Natural killer cell (primary cell): ENCODE measurements at regions of chr10 and their contacts with region 1.

Region 1: DNA sequence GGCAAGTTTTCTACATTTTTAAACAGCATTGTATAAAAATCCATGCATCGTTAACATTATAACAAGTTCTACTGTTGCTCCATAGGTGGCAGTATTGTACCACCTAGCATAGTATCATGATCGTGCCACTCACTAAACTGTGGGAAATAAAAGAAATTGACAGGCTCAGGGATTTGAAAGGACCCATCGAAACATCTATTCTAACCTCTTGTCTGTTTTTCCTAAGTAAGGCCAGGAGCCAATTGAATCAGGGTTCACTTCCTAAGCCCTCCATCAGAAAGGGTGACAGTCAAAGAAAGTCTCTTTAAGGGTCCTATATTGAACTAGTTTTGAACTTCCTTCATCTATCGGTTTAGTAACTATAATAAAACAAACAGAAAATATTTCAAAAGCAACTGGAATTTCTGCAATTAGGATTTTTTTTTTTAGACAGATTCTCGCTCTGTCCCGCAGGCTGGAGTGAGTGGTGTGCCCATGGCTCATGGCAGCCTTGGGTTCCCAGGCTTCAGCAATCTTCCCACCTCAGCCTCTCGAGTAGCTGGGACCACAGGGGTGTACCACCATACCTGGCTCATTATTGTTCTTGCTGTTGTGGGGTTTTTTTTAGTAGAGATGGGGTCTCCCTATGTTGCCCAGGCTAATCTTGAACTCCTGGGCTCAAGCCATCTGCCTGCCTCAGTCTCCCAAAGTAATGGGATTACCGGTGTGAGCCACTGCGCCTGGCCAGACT is 9.4 kb downstream of the HACD1 start:
- DNase-seq: peak in 1 of 2 donors; percentile 79
- ATAC-seq: peak; percentile 87 to 95 (median 87)
- H3K4me3 ChIP-seq: no peak overlapping the region
- H3K4me3 Mint-ChIP-seq: no peak overlapping the region
- H3K27ac ChIP-seq: no peak overlapping the region
- H3K27ac Mint-ChIP-seq: no peak overlapping the region
- H3K4me1 ChIP-seq: no peaks in the 10 kb centered on the region
- H3K4me1 Mint-ChIP-seq: peaks cover 0 to 7% of the 10 kb centered on the region in 2 donors
- H3K27me3 ChIP-seq: no peaks in the 10 kb centered on the region
- H3K27me3 Mint-ChIP-seq: no peaks in the 10 kb centered on the region
- CTCF ChIP-seq: peak; percentile 96

Region 2: GRCh38 chr10:17238445-17239291 is 369.1 kb before region 1 on chr10:
- intact Hi-C with region 1: no loop called
- DNase-seq: no peak
- ATAC-seq: peak in 2 of 3 donors; percentile 14 to 25
- H3K4me3 ChIP-seq: no peak overlapping the region
- H3K4me3 Mint-ChIP-seq: no peak overlapping the region
- H3K27ac ChIP-seq: no peak overlapping the region
- H3K27ac Mint-ChIP-seq: peak overlapping the region; percentile 9 to 86
- H3K4me1 ChIP-seq: peaks cover 4% of the 10 kb centered on the region
- H3K4me1 Mint-ChIP-seq: peaks cover 4 to 19% of the 10 kb centered on the region in 2 donors
- H3K27me3 ChIP-seq: no peaks in the 10 kb centered on the region
- H3K27me3 Mint-ChIP-seq: no peaks in the 10 kb centered on the region
- CTCF ChIP-seq: no peak

Region 3: GRCh38 chr10:17742918-17743317 is 135.2 kb after region 1 on chr10:
- intact Hi-C with region 1: loop called (anchors 1 kb)
- DNase-seq: peak; percentile 55 to 79
- ATAC-seq: peak; percentile 60 to 82 (median 71)
- H3K4me3 ChIP-seq: no peak overlapping the region
- H3K4me3 Mint-ChIP-seq: no peak overlapping the region
- H3K27ac ChIP-seq: no peak overlapping the region
- H3K27ac Mint-ChIP-seq: no peak overlapping the region
- H3K4me1 ChIP-seq: peaks cover 4% of the 10 kb centered on the region
- H3K4me1 Mint-ChIP-seq: peaks cover 4 to 6% of the 10 kb centered on the region in 2 donors
- H3K27me3 ChIP-seq: no peaks in the 10 kb centered on the region
- H3K27me3 Mint-ChIP-seq: no peaks in the 10 kb centered on the region
- CTCF ChIP-seq: peak; percentile 89

Region 4: GRCh38 chr10:17872191-17873091 is 264.7 kb after region 1 on chr10:
- intact Hi-C with region 1: loop called (anchors 1 kb)
- DNase-seq: peak in 1 of 2 donors; percentile 50
- ATAC-seq: peak in 2 of 3 donors; percentile 41 to 46
- H3K4me3 ChIP-seq: no peak overlapping the region
- H3K4me3 Mint-ChIP-seq: no peak overlapping the region
- H3K27ac ChIP-seq: no peak overlapping the region
- H3K27ac Mint-ChIP-seq: no peak overlapping the region
- H3K4me1 ChIP-seq: no peaks in the 10 kb centered on the region
- H3K4me1 Mint-ChIP-seq: peaks cover 6% of the 10 kb centered on the region in 2 donors
- H3K27me3 ChIP-seq: no peaks in the 10 kb centered on the region
- H3K27me3 Mint-ChIP-seq: no peaks in the 10 kb centered on the region
- CTCF ChIP-seq: peak; percentile 57